ENCODE measurements at regions of chr14 and their contacts with region 1.

Region 1: GRCh38 chr14:49816844-49817243 is 35.7 kb downstream of the NEMF start:
- DNase-seq: no peak
- H3K4me3 ChIP-seq: no peak overlapping the region
- H3K27ac ChIP-seq: no peak overlapping the region
- H3K4me1 ChIP-seq: no peaks in the 10 kb centered on the region
- H3K27me3 ChIP-seq: no peaks in the 10 kb centered on the region
- CTCF ChIP-seq: no peak

Region 2: DNA sequence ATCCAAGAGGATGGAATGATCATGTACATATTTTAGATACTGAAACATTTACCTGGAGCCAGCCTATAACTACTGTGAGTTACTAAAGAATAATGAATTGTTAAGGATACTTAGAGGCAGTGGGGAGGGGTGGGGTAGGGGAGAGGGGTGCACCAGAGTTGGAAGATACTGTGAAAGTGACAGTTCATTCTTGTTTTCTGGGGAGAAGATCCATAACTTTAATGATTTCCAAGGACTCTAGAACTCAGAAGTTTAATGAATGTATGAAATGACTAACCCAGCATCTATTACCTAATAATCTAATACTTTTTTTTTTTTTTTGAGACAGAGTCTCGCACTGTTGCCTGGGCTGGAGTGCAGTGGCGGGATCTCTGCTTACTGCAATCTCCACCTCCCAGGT is 38.4 kb before region 1 on chr14:
- CTCF ChIA-PET with region 1: no interaction called
- dilution Hi-C with region 1: no loop called
- in situ Hi-C with region 1: no loop called
- intact Hi-C with region 1: loop called (anchors 5 kb)
- DNase-seq: no peak
- H3K4me3 ChIP-seq: no peak overlapping the region
- H3K27ac ChIP-seq: no peak overlapping the region
- H3K4me1 ChIP-seq: no peaks in the 10 kb centered on the region
- H3K27me3 ChIP-seq: no peaks in the 10 kb centered on the region
- CTCF ChIP-seq: no peak